ENCODE measurements at regions of chr21 and their contacts with region 1.

Region 1: GRCh38 chr21:26267389-26267788 is 96.8 kb upstream of the APP start:
- DNase-seq: no peak
- ATAC-seq: no peak
- H3K4me3 ChIP-seq: no peak overlapping the region
- H3K27ac ChIP-seq: no peak overlapping the region
- H3K4me1 ChIP-seq: no peaks in the 10 kb centered on the region
- H3K27me3 ChIP-seq: no peaks in the 10 kb centered on the region
- CTCF ChIP-seq: no peak
- POLR2A ChIP-seq: no peak

Region 2: GRCh38 chr21:26194326-26194725 is 73.1 kb before region 1 on chr21:
- intact Hi-C with region 1: no loop called
- DNase-seq: no peak
- ATAC-seq: no peak
- H3K4me3 ChIP-seq: no peak overlapping the region
- H3K27ac ChIP-seq: no peak overlapping the region
- H3K4me1 ChIP-seq: no peaks in the 10 kb centered on the region
- H3K27me3 ChIP-seq: no peaks in the 10 kb centered on the region
- CTCF ChIP-seq: no peak
- POLR2A ChIP-seq: no peak

Region 3: GRCh38 chr21:26207021-26207420 is 60.4 kb before region 1 on chr21:
- intact Hi-C with region 1: loop called in 1 of 10 experiments (anchors 10 kb)
- DNase-seq: no peak
- ATAC-seq: no peak
- H3K4me3 ChIP-seq: no peak overlapping the region
- H3K27ac ChIP-seq: no peak overlapping the region
- H3K4me1 ChIP-seq: no peaks in the 10 kb centered on the region
- H3K27me3 ChIP-seq: no peaks in the 10 kb centered on the region
- CTCF ChIP-seq: no peak
- POLR2A ChIP-seq: no peak

Region 4: DNA sequence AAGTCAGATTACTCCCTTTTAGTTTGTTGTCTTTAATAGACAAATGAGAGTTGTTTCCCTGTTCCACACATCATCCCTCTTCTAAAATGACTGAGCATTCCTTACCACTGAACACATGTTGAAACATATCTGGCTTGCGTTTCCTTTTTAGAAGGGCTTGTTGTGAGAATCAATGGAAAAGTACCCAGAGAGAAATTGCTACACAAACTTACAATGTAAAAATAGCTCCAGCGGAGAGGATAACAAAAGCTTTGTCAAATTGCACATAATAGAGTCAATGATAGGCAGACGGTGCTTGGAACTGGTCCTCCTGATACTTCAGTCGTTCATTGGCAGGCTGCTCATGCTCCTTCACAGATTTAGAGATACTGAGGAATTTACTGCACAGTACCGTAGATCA is 181.8 kb after region 1 on chr21:
- intact Hi-C with region 1: no loop called
- DNase-seq: no peak
- ATAC-seq: peak in 1 of 4 donors; percentile 77
- H3K4me3 ChIP-seq: no peak overlapping the region
- H3K27ac ChIP-seq: no peak overlapping the region
- H3K4me1 ChIP-seq: peaks cover 0 to 6% (median 0%) of the 10 kb centered on the region in 12 donors
- H3K27me3 ChIP-seq: no peaks in the 10 kb centered on the region
- CTCF ChIP-seq: no peak
- POLR2A ChIP-seq: no peak